ENCODE measurements at regions of chr14 and their contacts with region 1.

Region 1: GRCh38 chr14:67943947-67944346 is 124.4 kb downstream of the RAD51B start:
- DNase-seq: peak in 1 of 2 donors; percentile 86
- ATAC-seq: peak in 7 of 8 donors; percentile 53 to 73 (median 66)
- H3K4me3 ChIP-seq: no peak overlapping the region
- H3K27ac ChIP-seq: peak overlapping the region in 3 of 10 donors; percentile 35 to 76 (median 59)
- H3K4me1 ChIP-seq: peaks cover 0 to 56% (median 19%) of the 10 kb centered on the region in 9 donors
- H3K27me3 ChIP-seq: no peaks in the 10 kb centered on the region
- CTCF ChIP-seq: peak; percentile 59 to 85 (median 74)

Region 2: DNA sequence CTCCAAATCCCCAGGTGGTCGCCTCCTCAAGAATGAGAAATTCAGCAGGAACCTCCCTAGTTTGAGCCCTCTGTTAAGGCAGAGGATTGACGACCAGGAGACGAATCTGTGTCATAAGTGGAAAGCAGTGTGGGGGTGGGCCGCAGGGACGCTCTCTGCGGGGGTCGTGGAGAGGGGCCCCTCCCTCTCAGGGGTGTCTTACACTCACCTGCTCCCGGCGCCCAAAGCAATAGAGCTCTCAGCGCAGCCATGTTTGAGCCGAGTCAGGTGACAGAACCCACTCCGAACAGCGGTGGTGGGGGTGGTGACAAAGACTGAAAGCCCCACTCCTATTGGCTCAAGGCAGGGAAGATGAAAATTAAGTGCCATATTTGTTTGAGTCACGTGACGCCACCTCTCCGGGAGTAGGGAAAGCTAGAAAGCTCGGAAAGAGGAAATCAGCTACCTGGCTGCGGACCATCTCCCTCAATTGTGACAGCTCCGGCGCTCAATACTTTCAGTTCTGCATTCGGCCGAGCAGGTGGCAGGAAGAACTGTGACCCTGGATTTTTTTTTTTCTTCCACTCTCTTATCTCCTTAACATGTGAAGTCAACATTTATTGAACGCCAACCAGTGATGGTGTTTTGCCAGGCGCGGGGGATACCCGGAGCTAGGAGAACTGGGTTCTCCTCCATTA is 127.5 kb before region 1 on chr14 and contains the start of gene ZFYVE26:
- intact Hi-C with region 1: no loop called
- DNase-seq: peak; percentile 82 to 95
- ATAC-seq: peak; percentile 95 to 97 (median 96)
- H3K4me3 ChIP-seq: peak within 1 kb of the TSS; percentile 63 to 92 (median 76)
- H3K27ac ChIP-seq: peak within 1 kb of the TSS in 9 of 10 donors; percentile 61 to 91 (median 72)
- H3K4me1 ChIP-seq: peaks cover 6 to 57% (median 24%) of the 10 kb centered on the region in 9 donors
- H3K27me3 ChIP-seq: no peaks in the 10 kb centered on the region
- CTCF ChIP-seq: no peak
- total RNA-seq, gene ZFYVE26: 11.0 to 17.9 (median 15.4) TPM

Region 3: GRCh38 chr14:68232300-68233055 is 288.5 kb after region 1 on chr14:
- intact Hi-C with region 1: loop called in 1 of 10 experiments (anchors 5 kb)
- DNase-seq: peak in 1 of 2 donors; percentile 86
- ATAC-seq: peak; percentile 84 to 99 (median 96)
- H3K4me3 ChIP-seq: no peak overlapping the region
- H3K27ac ChIP-seq: peak overlapping the region; percentile 26 to 81 (median 69)
- H3K4me1 ChIP-seq: peaks cover 5 to 38% (median 23%) of the 10 kb centered on the region in 9 donors
- H3K27me3 ChIP-seq: no peaks in the 10 kb centered on the region
- CTCF ChIP-seq: no peak

Region 4: GRCh38 chr14:68520637-68521556 is 577.0 kb after region 1 on chr14:
- intact Hi-C with region 1: loop called in 1 of 10 experiments (anchors 10 kb)
- DNase-seq: no peak
- ATAC-seq: peak in 2 of 8 donors; percentile 25 to 48
- H3K4me3 ChIP-seq: no peak overlapping the region
- H3K27ac ChIP-seq: peak overlapping the region in 7 of 10 donors; percentile 33 to 73 (median 67)
- H3K4me1 ChIP-seq: peaks cover 0 to 79% (median 58%) of the 10 kb centered on the region in 9 donors
- H3K27me3 ChIP-seq: no peaks in the 10 kb centered on the region
- CTCF ChIP-seq: no peak

Region 5: GRCh38 chr14:68824517-68825347 is 880.8 kb after region 1 on chr14:
- intact Hi-C with region 1: loop called in 4 of 10 experiments (anchors 5 to 10 kb)
- DNase-seq: peak; percentile 83 to 88
- ATAC-seq: peak; percentile 93 to 96 (median 95)
- H3K4me3 ChIP-seq: no peak overlapping the region
- H3K27ac ChIP-seq: no peak overlapping the region
- H3K4me1 ChIP-seq: peaks cover 0 to 17% (median 4%) of the 10 kb centered on the region in 9 donors
- H3K27me3 ChIP-seq: no peaks in the 10 kb centered on the region
- CTCF ChIP-seq: peak; percentile 76 to 98 (median 92)

Measured in heart right ventricle (tissue), 16 donors.